ENCODE measurements at regions of chr4 and their contacts with region 1.

Region 1: GRCh38 chr4:83284193-83285054 is at the start of gene COQ2:
- DNase-seq: peak; percentile 87 to 96 (median 91)
- ATAC-seq: peak; percentile 91
- H3K4me3 ChIP-seq: peak within 1 kb of the TSS; percentile 96
- H3K4me3 Mint-ChIP-seq: peak within 1 kb of the TSS; percentile 80 to 99 (median 97)
- H3K27ac ChIP-seq: peak within 1 kb of the TSS; percentile 88
- H3K27ac Mint-ChIP-seq: peak within 1 kb of the TSS; percentile 88 to 99 (median 97)
- H3K4me1 ChIP-seq: peaks cover 5 to 8% of the 10 kb centered on the region in 2 donors
- H3K4me1 Mint-ChIP-seq: peaks cover 21 to 47% (median 38%) of the 10 kb centered on the region in 7 donors
- H3K27me3 ChIP-seq: no peaks in the 10 kb centered on the region
- H3K27me3 Mint-ChIP-seq: peaks cover 0 to 3% (median 0%) of the 10 kb centered on the region in 5 donors
- total RNA-seq, gene COQ2: 7.2 to 12.7 (median 10.2) TPM

Region 2: DNA sequence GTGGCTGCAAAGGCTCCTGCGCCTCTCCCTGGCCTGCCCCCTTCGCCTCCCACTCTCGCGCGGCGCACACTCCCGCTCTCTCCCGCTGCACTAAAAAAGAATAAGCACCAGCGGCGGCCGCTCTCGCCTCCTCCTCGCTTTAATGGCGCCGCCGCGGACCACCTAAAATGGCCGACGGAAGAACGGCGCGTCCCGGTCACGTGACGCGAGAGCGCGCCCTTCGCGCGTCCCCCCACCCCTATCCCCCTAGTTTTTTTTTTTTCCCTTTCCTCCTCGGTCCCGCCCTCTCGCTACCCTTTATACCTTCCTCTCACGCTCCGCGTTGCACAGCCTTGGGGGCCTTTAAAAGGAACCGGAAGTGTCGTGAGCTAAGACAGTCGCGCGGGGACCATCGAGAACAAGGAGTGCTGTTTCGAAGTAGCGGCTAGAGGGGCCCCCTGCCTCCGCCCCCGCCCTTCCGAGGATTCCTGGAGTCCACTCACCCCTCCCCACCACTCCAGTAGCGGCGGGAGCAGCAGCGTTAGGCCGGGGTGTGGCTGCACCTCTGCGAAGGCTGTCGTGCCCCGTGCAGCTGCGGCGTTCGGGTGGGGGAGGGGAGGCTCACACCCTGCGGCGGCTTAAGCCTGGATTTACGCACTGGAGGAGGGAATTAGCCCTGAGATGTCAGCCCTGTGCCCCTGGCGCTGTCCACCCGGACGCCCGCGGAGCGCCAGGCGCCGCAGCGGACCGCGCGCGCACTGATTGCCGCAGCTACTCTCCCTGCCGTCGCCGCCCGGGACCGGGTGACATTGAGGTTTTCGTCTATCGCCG is 910.4 kb before region 1 on chr4 and contains the start of gene HNRNPD:
- CTCF ChIA-PET with region 1: no interaction called
- POLR2A ChIA-PET with region 1: no interaction called
- intact Hi-C with region 1: loop called (anchors 1 to 2 kb)
- DNase-seq: peak; percentile 79 to 96 (median 93)
- ATAC-seq: peak; percentile 93
- H3K4me3 ChIP-seq: peak within 1 kb of the TSS; percentile 94
- H3K4me3 Mint-ChIP-seq: peak within 1 kb of the TSS; percentile 91 to 100 (median 97)
- H3K27ac ChIP-seq: peak within 1 kb of the TSS; percentile 98
- H3K27ac Mint-ChIP-seq: peak within 1 kb of the TSS; percentile 95 to 100 (median 99)
- H3K4me1 ChIP-seq: peaks cover 28 to 31% of the 10 kb centered on the region in 2 donors
- H3K4me1 Mint-ChIP-seq: peaks cover 35 to 62% (median 54%) of the 10 kb centered on the region in 7 donors
- H3K27me3 ChIP-seq: no peaks in the 10 kb centered on the region
- H3K27me3 Mint-ChIP-seq: peaks cover 0 to 3% (median 0%) of the 10 kb centered on the region in 5 donors
- total RNA-seq, gene HNRNPD: 200 to 355 (median 238) TPM

Region 3: DNA sequence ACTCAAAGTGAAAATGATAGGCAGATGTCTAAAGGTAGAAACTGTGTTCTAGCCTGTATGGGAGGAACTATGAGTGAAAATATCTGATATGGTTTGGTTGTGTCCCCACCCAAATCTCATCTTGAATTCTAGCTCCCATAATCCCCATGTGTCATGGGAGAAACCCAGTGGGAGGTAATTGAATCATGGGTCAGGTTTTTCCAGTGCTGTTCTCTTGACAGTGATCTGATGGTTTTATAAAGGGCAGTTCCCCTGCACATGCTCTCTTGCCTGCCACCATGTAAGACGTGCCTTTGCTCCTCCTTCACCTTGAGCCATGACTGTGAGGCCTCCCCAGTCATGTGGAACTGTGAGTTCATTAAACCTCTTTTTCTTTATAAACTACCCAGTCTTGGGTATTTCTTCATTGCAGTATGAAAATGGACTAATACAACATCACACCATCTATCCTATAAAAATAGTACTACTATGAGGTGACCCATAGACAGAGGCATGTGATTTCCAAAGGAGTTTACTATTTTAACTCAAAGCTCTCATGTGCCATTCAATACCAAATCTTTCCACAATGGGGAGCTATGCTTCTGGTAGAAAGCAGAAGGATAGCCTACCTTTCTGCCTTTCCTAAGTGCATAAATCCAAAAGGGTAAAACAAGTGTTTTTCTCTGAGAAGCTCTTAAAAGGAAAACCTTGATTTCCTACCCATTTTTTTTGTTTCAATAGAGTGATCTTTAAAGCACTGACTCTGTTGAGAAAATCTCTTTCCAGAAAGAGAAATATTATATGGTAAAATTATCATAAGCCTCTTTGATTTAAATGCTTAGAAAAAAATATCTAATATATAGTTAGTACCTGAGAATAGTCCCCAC is 432.3 kb before region 1 on chr4:
- CTCF ChIA-PET with region 1: interaction called, 5 read pairs
- POLR2A ChIA-PET with region 1: no interaction called
- intact Hi-C with region 1: loop called in 1 of 2 experiments (anchors 5 kb)
- DNase-seq: peak in 6 of 9 donors; percentile 20 to 38 (median 32)
- ATAC-seq: peak; percentile 58
- H3K4me3 ChIP-seq: no peak overlapping the region
- H3K4me3 Mint-ChIP-seq: no peak overlapping the region
- H3K27ac ChIP-seq: no peak overlapping the region
- H3K27ac Mint-ChIP-seq: peak overlapping the region in 4 of 9 donors; percentile 21 to 47 (median 30)
- H3K4me1 ChIP-seq: no peaks in the 10 kb centered on the region
- H3K4me1 Mint-ChIP-seq: peaks cover 0 to 17% (median 3%) of the 10 kb centered on the region in 7 donors
- H3K27me3 ChIP-seq: no peaks in the 10 kb centered on the region
- H3K27me3 Mint-ChIP-seq: no peaks in the 10 kb centered on the region

Region 4: DNA sequence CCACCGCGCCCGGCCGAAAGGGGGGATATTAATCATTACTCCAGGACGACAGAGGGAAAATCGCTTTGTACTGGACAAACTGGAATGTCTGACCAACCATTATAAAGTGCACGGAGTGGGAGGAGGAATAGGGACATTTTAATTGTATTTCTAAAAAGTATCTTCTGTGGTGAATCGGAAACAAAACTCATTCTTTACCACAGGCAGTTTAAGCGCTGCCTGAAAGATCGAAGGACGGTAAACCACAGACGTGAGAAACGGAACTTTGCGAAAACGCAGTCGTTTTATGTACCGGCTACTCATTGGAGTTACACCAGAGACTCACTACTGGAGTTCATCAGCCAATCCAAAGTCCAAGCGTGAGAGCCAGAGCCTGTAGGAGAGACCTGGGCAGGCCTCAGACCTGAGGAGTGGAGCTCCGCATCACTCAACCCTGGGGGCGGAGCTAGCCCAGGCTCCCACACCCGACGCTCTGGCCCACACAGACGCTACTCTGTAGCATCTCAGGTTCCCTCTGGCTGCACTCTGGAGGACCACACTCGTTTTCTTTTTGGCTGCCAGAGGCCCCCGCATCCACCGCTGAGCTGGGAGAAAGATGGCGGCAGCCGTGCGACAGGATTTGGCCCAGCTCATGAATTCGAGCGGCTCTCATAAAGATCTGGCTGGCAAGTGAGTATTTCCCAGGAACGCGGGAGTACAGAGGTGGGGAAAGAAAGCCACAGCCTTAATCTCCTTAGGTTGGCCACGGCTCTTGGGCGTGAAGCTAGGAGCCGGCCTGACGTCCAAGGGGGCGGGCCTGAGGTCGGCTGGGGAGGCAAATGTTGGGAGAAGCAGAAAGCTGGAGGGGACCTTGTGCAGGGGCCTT is 249.6 kb before region 1 on chr4 and contains the start of gene COPS4:
- CTCF ChIA-PET with region 1: interaction called, 5 read pairs
- POLR2A ChIA-PET with region 1: interaction called, 18 read pairs
- intact Hi-C with region 1: loop called (anchors 1 kb)
- DNase-seq: peak; percentile 77 to 98 (median 97)
- ATAC-seq: peak; percentile 99
- H3K4me3 ChIP-seq: peak within 1 kb of the TSS; percentile 98
- H3K4me3 Mint-ChIP-seq: peak within 1 kb of the TSS; percentile 92 to 100 (median 98)
- H3K27ac ChIP-seq: peak within 1 kb of the TSS; percentile 94
- H3K27ac Mint-ChIP-seq: peak within 1 kb of the TSS; percentile 94 to 100 (median 97)
- H3K4me1 ChIP-seq: peaks cover 4 to 19% of the 10 kb centered on the region in 2 donors
- H3K4me1 Mint-ChIP-seq: peaks cover 19 to 44% (median 35%) of the 10 kb centered on the region in 7 donors
- H3K27me3 ChIP-seq: no peaks in the 10 kb centered on the region
- H3K27me3 Mint-ChIP-seq: no peaks in the 10 kb centered on the region
- total RNA-seq, gene COPS4: 23.5 to 32.8 (median 24.7) TPM

Region 5: GRCh38 chr4:83110223-83110945 is 174.0 kb before region 1 on chr4:
- CTCF ChIA-PET with region 1: interaction called, 3 read pairs
- POLR2A ChIA-PET with region 1: interaction called, 8 read pairs
- intact Hi-C with region 1: loop called (anchors 1 kb)
- DNase-seq: peak; percentile 81 to 89 (median 87)
- ATAC-seq: peak; percentile 88
- H3K4me3 ChIP-seq: peak overlapping the region; percentile 82
- H3K4me3 Mint-ChIP-seq: peak overlapping the region; percentile 94 to 99 (median 98)
- H3K27ac ChIP-seq: peak overlapping the region; percentile 88
- H3K27ac Mint-ChIP-seq: peak overlapping the region; percentile 92 to 99 (median 98)
- H3K4me1 ChIP-seq: peaks cover 24 to 35% of the 10 kb centered on the region in 2 donors
- H3K4me1 Mint-ChIP-seq: peaks cover 26 to 60% (median 45%) of the 10 kb centered on the region in 7 donors
- H3K27me3 ChIP-seq: no peaks in the 10 kb centered on the region
- H3K27me3 Mint-ChIP-seq: no peaks in the 10 kb centered on the region

Region 6: DNA sequence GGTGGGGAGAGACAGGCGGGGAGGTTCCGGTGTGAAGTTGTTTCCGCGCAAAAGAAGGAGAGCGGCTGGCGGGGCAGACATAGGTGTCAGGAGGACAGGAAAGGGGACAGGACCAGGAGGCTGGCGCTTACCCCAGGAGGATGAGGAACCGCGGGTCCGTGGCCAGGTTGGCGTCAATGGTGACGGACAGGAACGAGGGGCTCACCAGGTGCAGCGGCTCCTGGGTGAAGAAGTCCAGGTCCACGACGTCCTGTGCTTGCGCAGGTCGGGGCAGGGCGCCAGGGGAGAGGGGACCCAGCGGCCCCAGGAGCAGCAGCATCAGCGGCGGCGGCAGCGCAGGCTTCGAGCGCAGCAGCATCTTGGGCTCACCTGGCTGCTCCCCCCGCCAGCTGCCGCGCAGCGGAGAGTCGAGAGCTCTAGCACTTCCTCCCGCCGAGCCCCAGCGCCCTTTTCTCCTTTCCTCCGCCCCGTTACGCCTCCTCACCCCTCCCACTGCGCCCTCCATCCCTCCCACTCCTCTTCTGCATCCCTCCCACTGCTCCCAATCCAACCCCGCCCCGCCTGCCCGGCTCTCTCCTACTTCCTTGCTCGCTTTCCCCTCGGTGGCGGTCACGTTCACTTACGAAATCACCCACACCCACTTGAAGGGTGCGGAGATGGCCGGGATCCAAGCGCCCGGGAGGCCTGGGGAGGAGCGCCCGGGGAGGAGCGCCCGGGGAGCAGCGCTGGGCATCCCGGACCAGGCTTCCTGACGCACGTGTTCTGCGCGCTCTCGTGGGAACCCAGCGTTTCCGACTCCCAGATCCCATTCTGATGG is 50.2 kb after region 1 on chr4 and contains the start of gene HPSE:
- CTCF ChIA-PET with region 1: no interaction called
- POLR2A ChIA-PET with region 1: interaction called, 4 read pairs
- intact Hi-C with region 1: loop called (anchors 1 kb)
- DNase-seq: peak; percentile 48 to 73 (median 69)
- ATAC-seq: peak; percentile 94
- H3K4me3 ChIP-seq: peak within 1 kb of the TSS; percentile 80
- H3K4me3 Mint-ChIP-seq: peak within 1 kb of the TSS; percentile 85 to 97 (median 92)
- H3K27ac ChIP-seq: peak within 1 kb of the TSS; percentile 70
- H3K27ac Mint-ChIP-seq: peak within 1 kb of the TSS; percentile 72 to 95 (median 87)
- H3K4me1 ChIP-seq: peaks cover 11% of the 10 kb centered on the region in 2 donors
- H3K4me1 Mint-ChIP-seq: peaks cover 16 to 47% (median 33%) of the 10 kb centered on the region in 7 donors
- H3K27me3 ChIP-seq: no peaks in the 10 kb centered on the region
- H3K27me3 Mint-ChIP-seq: peaks cover 0 to 26% (median 0%) of the 10 kb centered on the region in 5 donors
- total RNA-seq, gene HPSE: 4.4 to 16.2 (median 6.6) TPM

Region 7: DNA sequence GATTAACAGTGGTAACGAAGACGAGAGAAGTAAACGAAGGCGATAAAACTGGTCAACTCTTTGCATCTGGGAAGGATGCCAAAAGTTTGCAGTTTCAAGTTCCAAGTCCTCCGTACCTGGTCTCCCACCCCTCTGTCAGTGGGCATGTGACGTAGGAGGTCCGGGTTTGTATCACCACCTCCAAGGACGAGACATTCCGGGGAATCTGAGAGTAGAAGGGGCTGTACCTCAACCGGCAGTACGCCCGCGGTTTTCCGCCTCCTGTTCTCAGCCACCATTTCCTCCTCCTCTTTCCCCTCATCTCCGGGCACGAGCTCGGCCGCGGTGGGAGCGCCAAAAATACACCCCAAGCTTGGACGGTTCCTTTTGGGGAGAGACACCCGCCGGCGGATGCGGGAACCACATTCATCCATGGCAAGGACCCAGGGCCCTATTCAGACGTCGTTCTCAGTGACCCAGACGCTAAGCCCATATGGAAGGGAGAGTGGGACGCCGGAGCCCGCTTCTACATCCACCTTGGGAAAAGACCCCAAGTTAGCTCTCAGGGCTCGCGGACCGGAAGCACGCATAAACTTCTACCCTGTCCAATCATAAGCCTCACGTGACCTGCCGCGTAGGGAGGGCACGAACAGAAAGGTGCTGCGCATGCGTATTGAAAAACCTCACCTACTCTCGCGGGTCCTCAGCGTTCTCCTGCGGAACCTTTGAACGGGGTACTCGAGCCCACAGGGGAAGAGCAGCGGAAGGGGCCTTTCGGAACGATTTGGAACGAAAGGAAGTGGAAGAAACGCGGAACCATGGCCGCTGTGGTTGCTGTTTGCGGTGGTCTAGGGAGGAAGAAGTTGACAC is 171.1 kb after region 1 on chr4 and contains the starts of genes HELQ and MRPS18C:
- CTCF ChIA-PET with region 1: no interaction called
- POLR2A ChIA-PET with region 1: interaction called, 5 read pairs
- intact Hi-C with region 1: loop called (anchors 1 kb)
- DNase-seq: peak; percentile 77 to 98 (median 97)
- ATAC-seq: peak; percentile 94
- H3K4me3 ChIP-seq: peak within 1 kb of the TSS; percentile 75
- H3K4me3 Mint-ChIP-seq: peak within 1 kb of the TSS; percentile 98 to 100 (median 99)
- H3K27ac ChIP-seq: peak within 1 kb of the TSS; percentile 98
- H3K27ac Mint-ChIP-seq: peak within 1 kb of the TSS; percentile 100
- H3K4me1 ChIP-seq: peaks cover 24 to 33% of the 10 kb centered on the region in 2 donors
- H3K4me1 Mint-ChIP-seq: peaks cover 21 to 75% (median 58%) of the 10 kb centered on the region in 7 donors
- H3K27me3 ChIP-seq: no peaks in the 10 kb centered on the region
- H3K27me3 Mint-ChIP-seq: peaks cover 0 to 3% (median 0%) of the 10 kb centered on the region in 5 donors
- total RNA-seq, gene HELQ: 14.1 to 53.9 (median 40.4) TPM
- total RNA-seq, gene MRPS18C: 18.4 to 56.1 (median 46.7) TPM